Right ventricle myocardium superior (tissue), 1 donor: ENCODE measurements at regions of chr7 and their contacts with region 1.

Region 1: GRCh38 chr7:78716876-78717275 is 736.6 kb downstream of the MAGI2 start:
- DNase-seq: no peak
- ATAC-seq: no peak

Region 2: DNA sequence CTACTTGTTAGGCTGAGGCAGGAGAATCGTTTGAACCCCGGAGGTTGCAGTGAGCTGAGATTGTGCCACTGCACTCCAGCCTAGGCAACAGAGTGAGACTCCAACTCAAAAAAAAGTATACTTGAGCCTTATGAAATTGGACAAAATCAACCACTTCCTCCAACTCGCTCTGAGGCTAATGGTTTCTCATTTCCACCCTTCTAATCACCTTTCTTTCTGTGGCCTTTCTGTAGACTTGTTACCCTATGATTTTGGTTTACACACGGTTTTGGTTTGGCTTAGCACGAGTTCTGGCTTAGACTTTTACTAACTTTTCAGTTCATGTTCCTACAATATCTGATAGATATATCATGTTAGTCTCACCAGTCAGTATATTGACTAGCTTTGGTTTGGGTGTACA is 766.3 kb before region 1 on chr7:
- intact Hi-C with region 1: no loop called
- DNase-seq: no peak
- ATAC-seq: no peak

Region 3: DNA sequence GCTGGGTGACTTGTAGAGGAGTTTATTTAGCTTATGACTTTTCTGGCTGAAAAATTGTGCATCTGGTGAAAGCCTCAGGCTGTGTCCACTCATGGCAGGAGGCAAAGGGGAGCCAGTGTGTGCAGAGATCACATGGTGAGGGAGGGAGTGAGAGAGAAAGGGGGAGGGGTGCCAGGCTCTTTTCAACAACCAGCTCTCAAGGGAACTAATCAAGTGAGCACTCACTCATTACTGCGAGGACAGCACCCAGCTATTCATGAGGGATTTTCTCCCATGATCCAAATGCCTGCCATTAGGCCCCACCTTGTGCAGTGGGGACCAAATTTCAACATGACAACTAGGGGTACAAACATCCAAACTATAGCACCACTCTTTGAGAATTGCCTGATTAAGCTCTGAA is 146.4 kb after region 1 on chr7:
- intact Hi-C with region 1: loop called (anchors 5 kb)
- DNase-seq: no peak
- ATAC-seq: peak; percentile 89

Region 4: GRCh38 chr7:79199961-79200360 is 483.1 kb after region 1 on chr7:
- intact Hi-C with region 1: no loop called
- DNase-seq: no peak
- ATAC-seq: no peak